Natural killer cell (primary cell): ENCODE measurements at regions of chr17 and their contacts with region 1.

Region 1: GRCh38 chr17:45098869-45099616 is 33.3 kb downstream of the PLCD3 start:
- DNase-seq: peak; percentile 67 to 82
- ATAC-seq: peak; percentile 86 to 97 (median 91)
- H3K4me3 ChIP-seq: no peak overlapping the region
- H3K4me3 Mint-ChIP-seq: no peak overlapping the region
- H3K27ac ChIP-seq: no peak overlapping the region
- H3K27ac Mint-ChIP-seq: peak overlapping the region in 1 of 2 donors; percentile 64
- H3K4me1 ChIP-seq: no peaks in the 10 kb centered on the region
- H3K4me1 Mint-ChIP-seq: peaks cover 0 to 6% of the 10 kb centered on the region in 2 donors
- H3K27me3 ChIP-seq: no peaks in the 10 kb centered on the region
- H3K27me3 Mint-ChIP-seq: no peaks in the 10 kb centered on the region
- CTCF ChIP-seq: peak; percentile 82

Region 2: GRCh38 chr17:44911133-44912001 is 187.7 kb before region 1 on chr17:
- intact Hi-C with region 1: loop called (anchors 5 kb)
- DNase-seq: peak; percentile 43 to 68
- ATAC-seq: peak; percentile 70 to 95 (median 90)
- H3K4me3 ChIP-seq: no peak overlapping the region
- H3K4me3 Mint-ChIP-seq: no peak overlapping the region
- H3K27ac ChIP-seq: no peak overlapping the region
- H3K27ac Mint-ChIP-seq: no peak overlapping the region
- H3K4me1 ChIP-seq: peaks cover 11% of the 10 kb centered on the region
- H3K4me1 Mint-ChIP-seq: peaks cover 0 to 6% of the 10 kb centered on the region in 2 donors
- H3K27me3 ChIP-seq: peaks cover 10% of the 10 kb centered on the region
- H3K27me3 Mint-ChIP-seq: peaks cover 24 to 28% of the 10 kb centered on the region in 2 donors
- CTCF ChIP-seq: peak; percentile 40

Region 3: GRCh38 chr17:44924107-44924544 is 174.9 kb before region 1 on chr17:
- intact Hi-C with region 1: no loop called
- DNase-seq: no peak
- ATAC-seq: no peak
- H3K4me3 ChIP-seq: no peak overlapping the region
- H3K4me3 Mint-ChIP-seq: no peak overlapping the region
- H3K27ac ChIP-seq: no peak overlapping the region
- H3K27ac Mint-ChIP-seq: no peak overlapping the region
- H3K4me1 ChIP-seq: peaks cover 4% of the 10 kb centered on the region
- H3K4me1 Mint-ChIP-seq: peaks cover 4 to 5% of the 10 kb centered on the region in 2 donors
- H3K27me3 ChIP-seq: peaks cover 5% of the 10 kb centered on the region
- H3K27me3 Mint-ChIP-seq: peaks cover 0 to 9% of the 10 kb centered on the region in 2 donors
- CTCF ChIP-seq: no peak